ENCODE measurements at regions of chr2 and their contacts with region 1.

Region 1: GRCh38 chr2:70086838-70087701 is at the start of gene PCBP1:
- DNase-seq: peak; percentile 95
- ATAC-seq: peak; percentile 73
- H3K4me3 ChIP-seq: peak within 1 kb of the TSS; percentile 95
- H3K27ac ChIP-seq: peak within 1 kb of the TSS; percentile 100
- H3K4me1 ChIP-seq: peaks cover 6% of the 10 kb centered on the region
- H3K27me3 ChIP-seq: no peaks in the 10 kb centered on the region
- CTCF ChIP-seq: no peak
- POLR2A ChIP-seq: peak; percentile 76
- RAD21 ChIP-seq: peak; percentile 2; the same call in 1 of the 2 replicates
- total RNA-seq, gene PCBP1: 33.6 and 33.7 TPM in 2 replicates

Region 2: GRCh38 chr2:69946351-69947077 is 140.6 kb before region 1 on chr2:
- CTCF ChIA-PET with region 1: no interaction called
- POLR2A ChIA-PET with region 1: no interaction called
- dilution Hi-C with region 1: no loop called
- in situ Hi-C with region 1: no loop called
- intact Hi-C with region 1: no loop called
- DNase-seq: peak; percentile 74
- ATAC-seq: peak; percentile 68
- H3K4me3 ChIP-seq: no peak overlapping the region
- H3K27ac ChIP-seq: no peak overlapping the region
- H3K4me1 ChIP-seq: peaks cover 8% of the 10 kb centered on the region
- H3K27me3 ChIP-seq: no peaks in the 10 kb centered on the region
- CTCF ChIP-seq: no peak
- POLR2A ChIP-seq: no peak
- RAD21 ChIP-seq: no peak

Region 3: DNA sequence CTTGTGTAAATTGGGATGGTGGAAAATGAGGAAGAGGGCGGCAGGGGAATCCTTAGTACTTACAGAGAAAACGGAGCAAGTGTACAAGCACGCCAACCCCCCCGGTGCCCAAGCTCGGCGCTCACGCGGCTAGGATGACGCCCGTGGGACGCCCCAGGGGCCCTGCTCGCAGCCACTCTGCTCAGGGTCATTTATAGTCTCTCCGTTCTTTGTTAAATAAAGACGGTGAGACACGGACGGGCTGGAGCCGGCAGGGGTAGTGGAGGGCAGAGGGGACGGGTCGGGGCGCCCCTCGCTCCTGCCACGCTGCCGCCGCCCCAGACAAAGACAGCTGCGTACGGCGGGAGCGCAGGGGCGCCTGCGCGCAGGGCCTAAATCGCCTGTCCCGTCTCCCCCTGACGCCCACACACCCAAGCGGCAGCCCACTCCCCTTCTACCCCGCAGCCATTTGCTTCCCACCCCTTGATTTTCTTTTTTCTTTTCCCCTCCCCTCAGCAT is 38.0 kb after region 1 on chr2:
- CTCF ChIA-PET with region 1: no interaction called
- POLR2A ChIA-PET with region 1: interaction called, 10 read pairs
- dilution Hi-C with region 1: no loop called
- in situ Hi-C with region 1: loop called (anchors 5 kb)
- intact Hi-C with region 1: loop called (anchors 1 kb)
- DNase-seq: peak; percentile 31
- ATAC-seq: peak; percentile 34
- H3K4me3 ChIP-seq: peak overlapping the region; percentile 20
- H3K27ac ChIP-seq: peak overlapping the region; percentile 54
- H3K4me1 ChIP-seq: peaks cover 17% of the 10 kb centered on the region
- H3K27me3 ChIP-seq: no peaks in the 10 kb centered on the region
- CTCF ChIP-seq: no peak
- POLR2A ChIP-seq: no peak
- RAD21 ChIP-seq: no peak

Region 4: GRCh38 chr2:70132244-70133126 is 45.4 kb after region 1 on chr2:
- CTCF ChIA-PET with region 1: interaction called, 4 read pairs
- POLR2A ChIA-PET with region 1: interaction called, 14 read pairs
- dilution Hi-C with region 1: no loop called
- in situ Hi-C with region 1: loop called (anchors 5 kb)
- intact Hi-C with region 1: loop called (anchors 1 kb)
- DNase-seq: peak; percentile 63
- ATAC-seq: peak; percentile 63
- H3K4me3 ChIP-seq: peak overlapping the region; percentile 18; the same call in 1 of the 2 replicates
- H3K27ac ChIP-seq: peak overlapping the region; percentile 79
- H3K4me1 ChIP-seq: peaks cover 8% of the 10 kb centered on the region
- H3K27me3 ChIP-seq: no peaks in the 10 kb centered on the region
- CTCF ChIP-seq: no peak
- POLR2A ChIP-seq: no peak
- RAD21 ChIP-seq: no peak

Region 5: DNA sequence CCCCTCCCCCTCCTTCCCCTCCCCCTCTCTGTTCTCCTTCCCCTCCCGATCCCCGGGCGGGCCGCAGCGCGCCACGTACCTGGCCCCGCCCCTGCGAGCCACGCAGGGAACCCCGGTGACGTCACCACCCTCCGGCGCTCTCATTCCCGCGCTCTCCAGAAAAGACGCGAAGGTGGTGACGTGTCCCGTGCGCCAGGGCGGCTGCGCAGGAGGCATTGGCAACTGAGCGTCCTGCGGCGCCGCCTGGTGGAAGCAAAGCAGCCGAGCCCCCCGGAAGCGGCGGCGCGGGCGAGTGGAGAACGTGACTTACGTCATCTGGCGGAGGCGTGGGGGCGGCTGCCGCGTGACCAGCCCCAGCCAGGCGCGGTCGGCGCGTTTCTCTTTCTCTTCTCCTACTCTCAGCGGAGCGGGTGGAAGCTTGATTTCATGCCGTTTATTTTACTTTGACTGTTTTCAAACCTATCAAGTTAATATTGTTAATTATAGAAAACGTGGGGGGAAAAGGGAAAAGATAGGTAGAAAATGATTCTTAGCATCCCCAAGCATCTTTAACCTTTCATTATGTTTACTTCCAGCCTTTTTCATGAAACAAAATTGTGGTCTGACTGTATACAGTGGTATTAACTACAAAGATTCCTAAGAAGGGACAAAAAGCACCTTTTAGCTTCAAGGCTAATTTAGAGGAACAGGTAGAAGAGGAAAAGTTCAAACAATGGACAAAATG is 55.7 kb after region 1 on chr2:
- CTCF ChIA-PET with region 1: interaction called, 3 read pairs
- POLR2A ChIA-PET with region 1: interaction called, 3 read pairs
- dilution Hi-C with region 1: no loop called
- in situ Hi-C with region 1: no loop called
- intact Hi-C with region 1: loop called (anchors 1 kb)
- DNase-seq: peak; percentile 99
- ATAC-seq: peak; percentile 88
- H3K4me3 ChIP-seq: peak overlapping the region; percentile 21; the same call in 1 of the 2 replicates
- H3K27ac ChIP-seq: peak overlapping the region; percentile 77
- H3K4me1 ChIP-seq: peaks cover 12% of the 10 kb centered on the region
- H3K27me3 ChIP-seq: no peaks in the 10 kb centered on the region
- CTCF ChIP-seq: peak; percentile 99
- POLR2A ChIP-seq: peak; percentile 94
- RAD21 ChIP-seq: peak; percentile 99

Region 6: GRCh38 chr2:70190418-70191243 is 103.6 kb after region 1 on chr2 and contains the start of gene C2orf42:
- CTCF ChIA-PET with region 1: no interaction called
- POLR2A ChIA-PET with region 1: no interaction called
- dilution Hi-C with region 1: no loop called
- in situ Hi-C with region 1: no loop called
- intact Hi-C with region 1: loop called (anchors 1 kb)
- DNase-seq: peak; percentile 98
- ATAC-seq: peak; percentile 96
- H3K4me3 ChIP-seq: peak within 1 kb of the TSS; percentile 90
- H3K27ac ChIP-seq: peak within 1 kb of the TSS; percentile 95
- H3K4me1 ChIP-seq: no peaks in the 10 kb centered on the region
- H3K27me3 ChIP-seq: no peaks in the 10 kb centered on the region
- CTCF ChIP-seq: 0 out of 2 replicates have a peak, but pooled peaks have one; percentile 9
- POLR2A ChIP-seq: peak; percentile 96
- RAD21 ChIP-seq: peak; percentile 24; the same call in 1 of the 2 replicates
- total RNA-seq, gene C2orf42: 24.4 and 31.5 TPM in 2 replicates

Region 7: GRCh38 chr2:70248181-70248847 is 161.2 kb after region 1 on chr2 and contains the start of gene TIA1:
- CTCF ChIA-PET with region 1: no interaction called
- POLR2A ChIA-PET with region 1: no interaction called
- dilution Hi-C with region 1: no loop called
- in situ Hi-C with region 1: no loop called
- intact Hi-C with region 1: loop called (anchors 5 kb)
- DNase-seq: peak; percentile 97
- ATAC-seq: peak; percentile 98
- H3K4me3 ChIP-seq: peak within 1 kb of the TSS; percentile 84
- H3K27ac ChIP-seq: peak within 1 kb of the TSS; percentile 96
- H3K4me1 ChIP-seq: peaks cover 2% of the 10 kb centered on the region; the same call in 1 of the 2 replicates
- H3K27me3 ChIP-seq: no peaks in the 10 kb centered on the region
- CTCF ChIP-seq: no peak
- POLR2A ChIP-seq: peak; percentile 95
- RAD21 ChIP-seq: no peak
- total RNA-seq, gene TIA1: 93.3 and 103 TPM in 2 replicates

Measured in IMR-90 (cell line).